ENCODE measurements at regions of chr12 and their contacts with region 1.

Region 1: DNA sequence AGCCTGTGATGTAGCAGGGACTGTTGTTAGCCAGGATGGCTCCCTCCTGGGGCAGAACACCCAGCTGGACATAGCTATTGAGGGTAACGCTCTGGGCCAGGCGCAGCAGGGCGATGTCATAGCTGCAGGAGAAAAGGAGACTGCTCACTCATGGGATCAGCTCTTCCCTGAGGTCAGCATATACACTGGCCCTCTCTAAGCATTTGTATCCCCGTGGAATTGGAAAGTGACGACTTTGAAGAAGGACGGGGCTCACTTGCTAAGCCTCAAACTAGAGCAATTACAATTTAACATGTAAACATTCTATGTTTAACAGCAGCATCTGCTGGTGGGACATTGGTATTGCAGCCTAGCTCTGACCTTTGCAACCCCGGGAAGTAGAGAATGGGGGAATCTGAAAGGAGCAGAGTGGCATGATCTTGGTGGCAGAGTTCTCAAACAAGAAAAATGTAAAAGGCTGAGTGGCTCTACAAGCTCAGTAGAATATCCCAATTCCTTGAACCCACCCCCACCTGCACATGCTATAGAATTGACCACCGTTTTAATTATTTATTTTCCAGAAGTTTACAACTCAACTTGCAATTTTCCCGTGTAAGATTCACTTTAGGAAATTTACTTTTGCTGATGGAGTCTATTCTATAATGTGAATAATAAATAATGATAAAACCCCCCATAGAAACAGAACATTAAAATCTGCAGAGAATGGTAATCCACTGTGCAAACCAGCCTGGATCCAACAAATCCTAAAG is 5.0 kb downstream of the CELA1 start:
- DNase-seq: peak; percentile 26
- H3K4me3 ChIP-seq: peak overlapping the region; percentile 10
- H3K27ac ChIP-seq: no peak overlapping the region
- H3K27me3 ChIP-seq: no peaks in the 10 kb centered on the region
- CTCF ChIP-seq: peak; percentile 100

Region 2: GRCh38 chr12:51083126-51083833 is 258.2 kb before region 1 on chr12 and contains the start of gene CSRNP2:
- CTCF ChIA-PET with region 1: interaction called, 7 read pairs
- POLR2A ChIA-PET with region 1: interaction called, 11 read pairs
- DNase-seq: peak; percentile 90
- H3K4me3 ChIP-seq: peak within 1 kb of the TSS; percentile 87
- H3K27ac ChIP-seq: peak within 1 kb of the TSS; percentile 77
- H3K27me3 ChIP-seq: no peaks in the 10 kb centered on the region
- CTCF ChIP-seq: no peak
- polyA plus RNA-seq, gene CSRNP2: 26.4 and 29.9 TPM in 2 replicates

Region 3: DNA sequence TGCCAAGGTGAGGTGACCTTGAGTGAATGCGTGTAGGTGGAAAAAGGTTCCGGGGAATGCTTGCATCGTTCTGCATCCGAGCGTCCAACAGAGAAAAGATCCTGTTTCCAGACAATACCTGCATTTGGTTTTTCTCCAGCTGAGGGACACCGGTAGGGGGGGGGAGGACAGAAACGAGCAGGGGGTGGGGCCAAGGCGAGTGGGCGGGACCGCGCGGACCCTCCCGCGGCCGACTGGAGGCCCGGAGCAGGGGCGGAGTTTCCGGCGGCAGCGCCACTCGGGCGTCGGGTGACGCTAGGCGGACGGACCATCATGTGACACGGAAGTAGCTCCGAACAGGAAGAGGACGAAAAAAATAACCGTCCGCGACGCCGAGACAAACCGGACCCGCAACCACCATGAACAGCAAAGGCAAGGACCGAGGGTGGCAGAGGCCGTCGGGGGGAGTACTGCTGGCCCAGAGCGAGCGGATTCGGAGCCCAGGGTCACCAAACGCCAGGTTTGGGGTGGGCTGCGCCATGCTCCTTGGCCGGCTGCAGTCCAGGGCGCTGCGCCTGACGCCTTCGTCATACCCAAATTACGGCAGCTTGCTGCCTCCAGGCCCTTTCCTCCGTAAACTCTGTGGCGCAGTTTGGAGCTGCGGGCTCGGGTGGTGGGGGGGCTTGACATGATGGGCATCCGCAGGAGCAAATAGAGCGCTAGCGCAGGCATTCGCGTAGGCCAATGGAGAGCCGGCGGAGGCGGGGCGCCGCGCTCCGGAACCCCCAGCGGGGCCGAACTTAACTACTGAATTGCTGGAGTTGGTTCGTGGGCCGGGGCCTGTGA is 102.7 kb before region 1 on chr12 and contains the start of gene DAZAP2:
- CTCF ChIA-PET with region 1: interaction called, 10 read pairs
- POLR2A ChIA-PET with region 1: interaction called, 9 read pairs
- DNase-seq: peak; percentile 85
- H3K4me3 ChIP-seq: peak within 1 kb of the TSS; percentile 100
- H3K27ac ChIP-seq: peak within 1 kb of the TSS; percentile 100
- H3K27me3 ChIP-seq: no peaks in the 10 kb centered on the region
- CTCF ChIP-seq: peak; percentile 20
- polyA plus RNA-seq, gene DAZAP2: 285 and 333 TPM in 2 replicates

Region 4: GRCh38 chr12:51270067-51270970 is 71.1 kb before region 1 on chr12 and contains the start of gene SMAGP:
- CTCF ChIA-PET with region 1: interaction called, 11 read pairs
- POLR2A ChIA-PET with region 1: interaction called, 3 read pairs
- DNase-seq: no peak
- H3K4me3 ChIP-seq: peak within 1 kb of the TSS; percentile 73
- H3K27ac ChIP-seq: peak within 1 kb of the TSS; percentile 75
- H3K27me3 ChIP-seq: no peaks in the 10 kb centered on the region
- CTCF ChIP-seq: 0 out of 2 replicates have a peak, but pooled peaks have one; percentile 6
- polyA plus RNA-seq, gene SMAGP: 31.4 and 38.2 TPM in 2 replicates

Region 5: DNA sequence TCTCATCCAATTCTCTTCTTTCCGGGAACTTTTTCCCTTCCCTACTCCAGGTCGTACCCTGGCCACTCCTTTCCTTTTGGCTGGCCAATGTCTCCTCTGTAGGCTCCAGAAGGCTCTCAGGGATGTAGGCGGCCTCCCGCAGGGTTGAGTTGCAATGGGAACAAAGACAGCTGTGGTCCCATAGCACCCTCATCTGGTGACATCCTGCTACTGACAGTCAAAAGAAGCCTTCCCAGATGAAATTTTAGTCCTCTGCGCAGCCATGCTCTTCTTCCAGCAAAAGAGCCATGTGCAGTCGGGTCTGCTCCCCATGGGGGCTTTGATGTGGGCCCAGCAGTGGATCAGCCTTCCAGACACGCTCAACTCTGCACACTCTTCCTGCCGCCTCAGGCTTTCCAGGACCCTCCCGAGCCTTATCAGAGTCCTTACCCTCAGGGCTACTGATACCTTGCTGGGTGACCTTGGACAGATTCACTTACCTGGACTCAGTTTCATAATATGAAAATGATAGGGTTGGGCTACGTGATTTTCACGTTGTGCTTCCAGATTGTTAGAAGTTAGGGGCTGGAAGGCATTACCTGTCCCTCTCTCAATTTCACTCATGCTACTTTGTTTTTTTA is 10.6 kb after region 1 on chr12:
- CTCF ChIA-PET with region 1: interaction called, 38 read pairs
- POLR2A ChIA-PET with region 1: interaction called, 5 read pairs
- DNase-seq: peak; percentile 30
- H3K4me3 ChIP-seq: no peak overlapping the region
- H3K27ac ChIP-seq: no peak overlapping the region
- H3K27me3 ChIP-seq: no peaks in the 10 kb centered on the region
- CTCF ChIP-seq: peak; percentile 76

Measured in AG04450 (cell line).